ENCODE measurements at regions of chr1 and their contacts with region 1.

Region 1: DNA sequence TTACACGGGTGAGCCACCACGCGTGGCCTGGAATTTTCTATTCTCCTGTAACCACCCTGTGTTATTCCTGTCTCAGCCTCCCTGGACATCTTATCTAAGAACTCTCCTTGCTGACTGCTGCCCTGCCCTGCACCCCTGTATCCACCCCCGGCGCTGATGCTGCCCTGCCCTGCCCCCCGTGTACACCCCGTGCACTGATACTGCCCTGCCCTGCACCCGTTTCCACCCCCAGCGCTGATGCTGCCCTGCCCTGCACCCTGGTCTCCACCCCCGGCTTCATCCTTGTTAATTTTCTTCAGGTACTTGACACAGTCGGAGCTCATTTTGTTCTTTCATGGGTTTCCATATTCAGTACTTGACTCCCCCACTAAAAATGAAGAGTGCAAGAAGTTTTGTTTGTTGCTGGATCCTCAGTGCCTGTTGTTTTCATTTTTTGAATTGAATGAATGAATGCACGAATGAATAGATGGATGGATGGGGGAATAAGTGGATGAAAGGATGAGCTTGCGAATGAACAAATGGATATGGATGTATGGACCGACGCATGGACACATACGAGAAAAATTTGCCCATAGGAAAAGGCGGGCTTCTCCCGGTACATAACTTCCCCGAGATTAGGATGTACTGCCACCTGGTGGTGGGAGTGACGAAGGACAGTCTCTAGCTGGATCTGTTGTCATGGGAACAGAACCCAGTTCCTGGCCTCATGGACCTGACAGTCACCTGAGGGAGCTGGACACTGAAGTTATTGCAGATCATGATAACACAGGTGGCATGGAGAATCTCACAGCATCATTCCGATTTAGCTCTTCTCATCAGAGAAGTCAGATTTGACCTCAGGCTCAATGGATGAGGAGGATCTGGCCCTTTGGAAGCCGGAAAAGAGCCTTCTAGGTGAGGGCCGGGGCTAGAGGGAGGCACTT is 14.9 kb downstream of the AADACL4 start:
- DNase-seq: peak; percentile 72
- ATAC-seq: peak; percentile 65
- H3K4me3 ChIP-seq: no peak overlapping the region
- H3K4me3 Mint-ChIP-seq: no peak overlapping the region
- H3K27ac ChIP-seq: no peak overlapping the region
- H3K27ac Mint-ChIP-seq: no peak overlapping the region
- H3K4me1 ChIP-seq: peaks cover 4 to 5% of the 10 kb centered on the region in 2 donors
- H3K4me1 Mint-ChIP-seq: peaks cover 3% of the 10 kb centered on the region
- H3K27me3 ChIP-seq: peaks cover 0 to 4% (median 1%) of the 10 kb centered on the region in 4 experiments
- H3K27me3 Mint-ChIP-seq: peaks cover 12% of the 10 kb centered on the region
- CTCF ChIP-seq: peak; percentile 87

Region 2: DNA sequence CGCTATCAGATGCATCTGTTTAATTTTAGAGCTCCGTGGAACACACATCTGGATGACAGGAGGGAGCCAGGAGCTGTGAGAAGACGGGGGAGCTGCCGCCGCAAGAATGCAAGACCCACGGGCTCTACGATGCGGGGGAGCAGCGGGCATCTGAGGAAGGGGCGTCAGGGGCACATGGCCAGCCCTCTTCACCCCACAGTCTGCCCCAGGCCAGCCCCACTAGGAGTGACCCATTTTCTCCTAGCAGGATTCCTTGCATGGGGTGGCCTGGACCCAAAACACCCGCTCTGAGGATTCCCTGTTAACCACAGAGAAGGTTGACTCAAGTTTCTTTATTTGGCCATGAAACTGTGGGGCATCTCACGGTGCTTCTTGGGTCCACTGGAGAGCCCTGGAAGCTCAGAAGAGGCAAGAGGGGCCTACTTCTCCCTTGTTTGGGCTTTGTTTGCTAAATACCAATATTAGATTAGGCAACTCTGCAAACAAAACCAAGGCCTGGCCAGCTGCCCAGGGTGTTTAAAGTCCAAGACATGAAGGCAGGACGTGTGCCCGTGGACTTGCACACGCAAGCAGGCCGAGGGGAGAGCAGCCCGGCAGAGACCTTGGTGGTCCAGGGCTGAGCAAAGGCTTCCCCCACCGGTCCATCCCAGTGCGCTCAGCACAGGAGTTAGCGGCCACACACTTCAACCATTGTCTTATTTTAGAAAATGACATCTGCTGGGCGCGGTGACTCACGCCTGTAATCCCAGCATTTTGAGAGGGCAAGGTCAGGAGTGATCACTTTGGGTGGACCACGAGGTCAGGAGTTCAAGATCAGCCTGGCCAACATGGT is 130.6 kb before region 1 on chr1:
- CTCF ChIA-PET with region 1: no interaction called
- POLR2A ChIA-PET with region 1: no interaction called
- intact Hi-C with region 1: no loop called
- DNase-seq: no peak
- ATAC-seq: no peak
- H3K4me3 ChIP-seq: no peak overlapping the region
- H3K4me3 Mint-ChIP-seq: no peak overlapping the region
- H3K27ac ChIP-seq: no peak overlapping the region
- H3K27ac Mint-ChIP-seq: no peak overlapping the region
- H3K4me1 ChIP-seq: no peaks in the 10 kb centered on the region
- H3K4me1 Mint-ChIP-seq: no peaks in the 10 kb centered on the region
- H3K27me3 ChIP-seq: no peaks in the 10 kb centered on the region
- H3K27me3 Mint-ChIP-seq: no peaks in the 10 kb centered on the region
- CTCF ChIP-seq: no peak

Region 3: DNA sequence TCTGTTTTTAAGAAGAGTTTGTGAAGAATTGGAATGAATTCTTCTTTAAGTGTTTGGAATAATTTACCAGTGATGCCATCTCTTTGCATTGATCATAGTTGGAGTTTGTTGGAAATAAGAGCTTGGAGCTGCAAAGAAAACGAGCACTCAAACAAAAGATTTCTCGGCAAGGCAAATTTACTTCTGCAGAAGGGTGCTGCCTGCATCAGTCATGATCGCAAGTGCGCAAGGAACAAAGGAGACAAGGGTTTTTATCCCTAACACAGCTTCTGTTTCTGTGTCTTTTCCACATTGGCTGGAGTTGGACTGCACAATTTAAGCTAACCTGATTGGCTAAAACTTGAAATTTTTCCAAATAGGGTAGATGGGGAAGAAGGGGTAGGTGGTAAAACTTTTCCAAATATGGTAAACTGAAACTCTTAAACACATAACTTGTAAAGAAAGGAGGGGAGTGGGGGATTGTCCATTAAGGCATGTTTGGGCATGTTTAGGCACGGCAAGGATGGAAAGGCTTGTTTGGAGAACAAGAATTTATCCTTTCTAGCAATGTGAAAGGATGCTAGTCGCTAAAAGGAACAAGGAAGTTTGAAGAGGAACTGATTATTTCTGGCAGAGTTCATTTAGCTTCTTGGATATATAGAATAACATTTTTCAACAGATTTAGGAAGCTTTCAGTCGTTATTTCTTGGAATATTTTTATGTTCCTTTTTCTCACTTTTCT is 18.4 kb before region 1 on chr1:
- CTCF ChIA-PET with region 1: interaction called, 14 read pairs
- POLR2A ChIA-PET with region 1: no interaction called
- intact Hi-C with region 1: no loop called
- DNase-seq: no peak
- ATAC-seq: no peak
- H3K4me3 ChIP-seq: no peak overlapping the region
- H3K4me3 Mint-ChIP-seq: no peak overlapping the region
- H3K27ac ChIP-seq: no peak overlapping the region
- H3K27ac Mint-ChIP-seq: no peak overlapping the region
- H3K4me1 ChIP-seq: no peaks in the 10 kb centered on the region
- H3K4me1 Mint-ChIP-seq: no peaks in the 10 kb centered on the region
- H3K27me3 ChIP-seq: peaks cover 0 to 7% (median 0%) of the 10 kb centered on the region in 4 experiments
- H3K27me3 Mint-ChIP-seq: no peaks in the 10 kb centered on the region
- CTCF ChIP-seq: no peak

Region 4: DNA sequence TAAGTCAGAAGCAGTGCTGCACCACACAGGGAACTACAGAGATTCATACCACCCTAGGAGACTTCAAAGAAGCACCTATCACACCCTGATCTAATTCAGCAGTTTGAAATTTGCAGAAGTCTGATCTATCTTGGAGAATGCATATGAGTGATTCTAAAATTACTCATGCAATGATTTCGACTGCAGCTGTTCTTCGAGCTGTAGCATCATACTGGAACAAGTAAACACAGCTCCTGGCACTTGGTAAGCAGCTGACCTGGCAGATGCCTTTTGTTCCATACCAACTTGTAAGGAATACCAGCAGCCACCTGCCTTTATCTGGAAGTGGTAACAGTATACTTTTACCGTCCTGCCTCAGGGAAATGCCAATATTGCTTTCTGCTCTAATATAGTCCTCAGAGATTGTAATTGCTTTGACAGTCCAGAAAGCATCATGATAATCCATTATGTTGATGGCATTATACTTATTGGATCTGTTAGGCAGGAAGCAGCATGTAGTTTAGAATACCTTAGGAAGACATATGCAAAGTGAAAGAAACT is 10.8 kb after region 1 on chr1:
- CTCF ChIA-PET with region 1: interaction called, 26 read pairs
- POLR2A ChIA-PET with region 1: no interaction called
- intact Hi-C with region 1: no loop called
- DNase-seq: no peak
- ATAC-seq: no peak
- H3K4me3 ChIP-seq: no peak overlapping the region
- H3K4me3 Mint-ChIP-seq: no peak overlapping the region
- H3K27ac ChIP-seq: no peak overlapping the region
- H3K27ac Mint-ChIP-seq: no peak overlapping the region
- H3K4me1 ChIP-seq: no peaks in the 10 kb centered on the region
- H3K4me1 Mint-ChIP-seq: no peaks in the 10 kb centered on the region
- H3K27me3 ChIP-seq: peaks cover 0 to 3% (median 2%) of the 10 kb centered on the region in 4 experiments
- H3K27me3 Mint-ChIP-seq: peaks cover 27% of the 10 kb centered on the region
- CTCF ChIP-seq: no peak

Region 5: GRCh38 chr1:12715896-12716437 is 57.2 kb after region 1 on chr1 and contains the start of gene AADACL3:
- CTCF ChIA-PET with region 1: no interaction called
- POLR2A ChIA-PET with region 1: no interaction called
- intact Hi-C with region 1: no loop called
- DNase-seq: no peak
- ATAC-seq: no peak
- H3K4me3 ChIP-seq: no peak within 1 kb of the TSS
- H3K4me3 Mint-ChIP-seq: no peak within 1 kb of the TSS
- H3K27ac ChIP-seq: no peak within 1 kb of the TSS
- H3K27ac Mint-ChIP-seq: no peak within 1 kb of the TSS
- H3K4me1 ChIP-seq: no peaks in the 10 kb centered on the region
- H3K4me1 Mint-ChIP-seq: no peaks in the 10 kb centered on the region
- H3K27me3 ChIP-seq: no peaks in the 10 kb centered on the region
- H3K27me3 Mint-ChIP-seq: peaks cover 33% of the 10 kb centered on the region
- CTCF ChIP-seq: no peak
- total RNA-seq, gene AADACL3: not detected in 2 replicates

Region 6: DNA sequence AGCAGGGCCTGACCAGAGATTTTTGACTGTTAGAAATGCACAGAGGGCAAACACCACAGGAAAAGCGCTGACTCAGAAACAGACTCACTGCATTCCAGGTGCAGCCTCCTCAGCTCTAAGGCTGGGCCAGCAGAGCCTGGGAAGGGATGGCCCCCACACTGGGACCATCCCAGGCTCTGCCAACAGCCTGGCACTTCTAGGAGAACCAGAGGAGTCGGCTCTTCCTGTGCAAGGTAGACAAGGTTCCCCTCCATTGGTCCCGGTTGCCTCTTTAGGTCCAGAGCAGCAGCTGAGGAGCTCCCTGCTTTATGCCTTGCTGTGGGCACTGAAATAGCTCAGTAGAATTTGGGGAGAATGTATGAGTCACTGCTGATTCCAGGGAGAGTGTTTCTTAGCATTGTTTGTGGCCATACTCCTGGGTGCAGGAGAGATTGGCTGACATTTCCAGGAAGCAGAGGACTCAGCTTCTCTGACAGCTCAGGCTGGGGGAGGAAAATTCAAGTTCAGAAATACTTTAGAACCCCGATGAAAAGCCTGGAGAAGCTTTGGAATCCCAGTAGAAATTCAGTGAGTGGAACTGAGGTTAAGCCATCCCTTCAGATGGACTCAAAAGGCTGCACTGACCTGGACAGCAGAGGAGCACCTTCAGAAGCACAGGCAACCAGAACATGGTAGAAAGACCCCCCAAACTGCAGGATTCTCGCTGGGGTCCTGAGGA is 152.1 kb after region 1 on chr1:
- CTCF ChIA-PET with region 1: no interaction called
- POLR2A ChIA-PET with region 1: no interaction called
- intact Hi-C with region 1: no loop called
- DNase-seq: no peak
- ATAC-seq: no peak
- H3K4me3 ChIP-seq: no peak overlapping the region
- H3K4me3 Mint-ChIP-seq: no peak overlapping the region
- H3K27ac ChIP-seq: no peak overlapping the region
- H3K27ac Mint-ChIP-seq: no peak overlapping the region
- H3K4me1 ChIP-seq: no peaks in the 10 kb centered on the region
- H3K4me1 Mint-ChIP-seq: no peaks in the 10 kb centered on the region
- H3K27me3 ChIP-seq: peaks cover 0 to 8% (median 0%) of the 10 kb centered on the region in 4 experiments
- H3K27me3 Mint-ChIP-seq: peaks cover 20% of the 10 kb centered on the region
- CTCF ChIP-seq: no peak

Measured in B cell (primary cell).